CD4-positive, alpha-beta T cell (primary cell): ENCODE measurements at regions of chr1 and their contacts with region 1.

Region 1: DNA sequence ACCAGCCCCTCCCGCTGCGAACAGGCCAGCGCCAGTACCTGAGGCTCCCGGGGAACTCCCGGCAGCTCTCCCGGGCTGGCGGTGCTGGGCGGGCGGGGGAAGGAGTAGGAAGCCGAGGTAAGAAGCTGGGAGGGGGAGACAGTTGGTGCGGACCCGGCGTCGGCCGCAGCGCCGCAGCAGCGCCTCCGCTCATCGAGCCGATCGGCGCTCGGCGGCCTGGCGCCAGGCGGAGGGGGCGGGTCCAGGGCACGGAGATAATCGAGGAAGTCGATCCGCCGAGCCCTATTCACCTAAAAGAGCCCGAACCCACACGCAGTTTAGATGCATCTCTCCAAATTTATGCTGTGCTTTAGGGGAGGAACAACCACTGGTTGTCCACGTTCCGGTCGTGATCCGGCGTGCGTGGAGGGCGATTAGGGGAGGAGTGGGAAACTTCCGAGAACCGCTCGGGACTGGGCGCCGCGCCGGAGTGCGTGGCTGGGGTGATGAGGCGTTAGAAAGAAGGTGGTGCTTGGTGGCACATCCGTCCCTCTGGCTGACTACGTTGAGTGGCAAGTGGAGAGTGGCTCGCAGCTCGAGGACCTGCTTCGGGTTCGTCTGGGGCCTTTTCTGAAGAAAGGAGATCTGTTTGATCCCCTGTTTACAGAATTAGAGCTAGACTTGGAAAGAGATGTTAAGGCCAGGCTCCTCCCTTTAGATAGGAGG is at the start of gene VAMP4:
- DNase-seq: peak; percentile 77 to 94 (median 84)
- ATAC-seq: peak; percentile 88
- H3K4me3 ChIP-seq: peak within 1 kb of the TSS; percentile 80
- H3K4me3 Mint-ChIP-seq: peak within 1 kb of the TSS; percentile 99
- H3K27ac ChIP-seq: peak within 1 kb of the TSS; percentile 95 to 96
- H3K27ac Mint-ChIP-seq: peak within 1 kb of the TSS; percentile 100
- H3K4me1 ChIP-seq: peaks cover 28% of the 10 kb centered on the region
- H3K4me1 Mint-ChIP-seq: peaks cover 63% of the 10 kb centered on the region
- H3K27me3 ChIP-seq: no peaks in the 10 kb centered on the region
- H3K27me3 Mint-ChIP-seq: no peaks in the 10 kb centered on the region
- CTCF ChIP-seq: no peak
- total RNA-seq, gene VAMP4: 8.1 to 12.1 TPM

Region 2: DNA sequence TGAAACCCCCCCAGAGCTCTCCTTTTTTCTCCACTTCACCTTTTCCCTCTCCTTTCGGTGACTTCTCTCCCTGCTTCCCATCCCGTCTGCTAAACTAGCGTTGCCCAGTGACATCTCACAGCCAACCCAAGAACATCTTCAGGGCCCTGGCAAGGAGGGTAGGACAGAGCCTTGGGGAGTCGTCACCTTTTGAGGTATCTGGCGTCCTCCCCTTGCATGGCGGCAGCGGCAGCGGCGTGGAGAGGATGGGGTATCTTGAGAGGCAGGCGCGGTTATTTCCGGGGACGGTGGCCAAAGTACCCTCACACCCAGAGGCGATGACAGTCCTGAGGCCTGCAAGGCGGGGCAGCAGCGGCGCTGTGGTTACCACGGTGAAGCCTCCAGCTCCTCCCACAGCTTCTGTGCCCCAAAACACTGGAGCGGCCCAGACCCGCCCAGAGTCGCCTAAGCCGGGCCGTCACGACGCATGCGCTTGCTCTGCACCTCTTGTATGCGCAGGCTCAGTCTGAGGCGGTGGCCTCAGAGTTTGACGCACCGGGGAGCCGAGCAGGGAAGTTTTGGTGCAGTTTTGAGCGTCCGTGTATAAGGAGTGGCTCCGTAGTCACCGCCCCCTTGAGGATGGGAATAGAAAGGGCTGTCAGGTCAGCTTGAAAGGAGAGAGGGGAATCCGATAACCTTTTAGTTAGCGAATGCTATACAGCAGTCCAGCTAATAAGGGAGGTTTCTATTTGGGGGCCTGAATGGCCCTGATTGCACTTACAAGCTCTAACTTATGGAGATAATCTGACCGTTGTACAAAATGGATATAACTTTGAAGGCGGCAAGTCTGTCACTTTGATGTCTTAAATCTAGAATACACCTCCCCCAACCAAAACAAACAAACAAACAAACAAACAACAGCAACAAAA is 1667.5 kb before region 1 on chr1 and contains the start of gene KIFAP3:
- CTCF ChIA-PET with region 1: no interaction called
- POLR2A ChIA-PET with region 1: interaction called, 3 read pairs
- intact Hi-C with region 1: loop called in 1 of 2 experiments (anchors 10 kb)
- DNase-seq: peak; percentile 88 to 99 (median 93)
- ATAC-seq: peak; percentile 95
- H3K4me3 ChIP-seq: peak within 1 kb of the TSS; percentile 83
- H3K4me3 Mint-ChIP-seq: peak within 1 kb of the TSS; percentile 97
- H3K27ac ChIP-seq: peak within 1 kb of the TSS; percentile 77 to 83
- H3K27ac Mint-ChIP-seq: peak within 1 kb of the TSS; percentile 85
- H3K4me1 ChIP-seq: peaks cover 15% of the 10 kb centered on the region
- H3K4me1 Mint-ChIP-seq: peaks cover 54% of the 10 kb centered on the region
- H3K27me3 ChIP-seq: no peaks in the 10 kb centered on the region
- H3K27me3 Mint-ChIP-seq: no peaks in the 10 kb centered on the region
- CTCF ChIP-seq: peak; percentile 69
- total RNA-seq, gene KIFAP3: 12.1 to 12.6 TPM

Region 3: DNA sequence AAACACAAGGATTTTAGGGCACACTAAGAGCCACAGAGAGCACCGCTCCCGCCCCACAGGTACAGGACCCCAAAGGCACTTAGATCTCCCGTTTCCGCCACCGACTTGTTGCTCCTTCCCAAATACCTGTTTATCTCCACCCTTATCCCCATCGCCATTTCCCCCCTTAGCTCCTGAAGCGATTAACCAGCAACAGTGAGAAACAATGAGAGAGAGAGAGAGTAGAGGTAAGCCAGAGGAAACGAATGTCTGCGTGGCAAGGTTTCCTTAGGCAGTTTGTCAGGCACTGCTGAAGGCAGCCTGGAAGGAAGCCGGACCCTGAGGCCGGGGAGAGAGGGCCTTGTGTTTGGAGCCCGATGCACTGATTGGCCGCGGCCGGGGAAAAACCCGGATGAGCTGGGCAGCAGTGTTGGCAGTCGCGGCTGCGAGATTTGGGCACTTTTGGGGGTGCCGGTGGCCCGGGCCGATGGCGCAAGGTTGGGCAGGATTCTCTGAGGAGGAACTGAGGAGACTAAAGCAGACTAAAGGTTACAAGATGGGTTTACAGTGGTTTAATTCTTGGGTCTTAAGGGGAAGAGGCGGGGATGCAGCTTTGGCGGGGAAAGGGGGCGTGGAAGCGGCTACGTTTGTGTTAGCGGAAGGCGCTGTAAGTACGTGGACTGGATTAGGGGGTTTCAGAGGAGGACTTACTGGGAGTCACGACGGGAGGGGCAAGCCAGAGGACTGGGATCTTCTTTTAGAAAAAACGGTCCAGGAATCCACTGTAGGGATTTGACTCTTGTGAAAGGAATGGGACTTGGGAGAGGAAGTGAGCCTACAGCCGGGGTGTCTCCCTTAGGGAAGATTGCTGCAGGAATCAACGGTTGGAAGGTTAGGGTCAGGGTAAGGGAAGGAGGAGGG is 1210.0 kb before region 1 on chr1 and contains the start of gene GORAB:
- CTCF ChIA-PET with region 1: no interaction called
- POLR2A ChIA-PET with region 1: no interaction called
- intact Hi-C with region 1: loop called in 1 of 2 experiments (anchors 5 kb)
- DNase-seq: peak; percentile 69 to 92 (median 78)
- ATAC-seq: peak; percentile 91
- H3K4me3 ChIP-seq: peak within 1 kb of the TSS; percentile 61
- H3K4me3 Mint-ChIP-seq: no peak within 1 kb of the TSS
- H3K27ac ChIP-seq: peak within 1 kb of the TSS; percentile 73 to 86
- H3K27ac Mint-ChIP-seq: no peak within 1 kb of the TSS
- H3K4me1 ChIP-seq: peaks cover 12% of the 10 kb centered on the region
- H3K4me1 Mint-ChIP-seq: peaks cover 20% of the 10 kb centered on the region
- H3K27me3 ChIP-seq: no peaks in the 10 kb centered on the region
- H3K27me3 Mint-ChIP-seq: no peaks in the 10 kb centered on the region
- CTCF ChIP-seq: no peak
- total RNA-seq, gene GORAB: 23.0 to 26.6 TPM

Region 4: GRCh38 chr1:171583581-171584201 is 158.3 kb before region 1 on chr1:
- CTCF ChIA-PET with region 1: no interaction called
- POLR2A ChIA-PET with region 1: interaction called, 3 read pairs
- intact Hi-C with region 1: loop called in 1 of 2 experiments (anchors 10 kb)
- DNase-seq: no peak
- ATAC-seq: no peak
- H3K4me3 ChIP-seq: no peak overlapping the region
- H3K4me3 Mint-ChIP-seq: no peak overlapping the region
- H3K27ac ChIP-seq: no peak overlapping the region
- H3K27ac Mint-ChIP-seq: no peak overlapping the region
- H3K4me1 ChIP-seq: no peaks in the 10 kb centered on the region
- H3K4me1 Mint-ChIP-seq: peaks cover 9% of the 10 kb centered on the region
- H3K27me3 ChIP-seq: no peaks in the 10 kb centered on the region
- H3K27me3 Mint-ChIP-seq: no peaks in the 10 kb centered on the region
- CTCF ChIP-seq: no peak

Region 5: GRCh38 chr1:171769171-171769570 is 27.1 kb after region 1 on chr1:
- CTCF ChIA-PET with region 1: no interaction called
- POLR2A ChIA-PET with region 1: interaction called, 12 read pairs
- intact Hi-C with region 1: no loop called
- DNase-seq: no peak
- ATAC-seq: no peak
- H3K4me3 ChIP-seq: no peak overlapping the region
- H3K4me3 Mint-ChIP-seq: no peak overlapping the region
- H3K27ac ChIP-seq: no peak overlapping the region
- H3K27ac Mint-ChIP-seq: no peak overlapping the region
- H3K4me1 ChIP-seq: no peaks in the 10 kb centered on the region
- H3K4me1 Mint-ChIP-seq: no peaks in the 10 kb centered on the region
- H3K27me3 ChIP-seq: no peaks in the 10 kb centered on the region
- H3K27me3 Mint-ChIP-seq: peaks cover 14% of the 10 kb centered on the region
- CTCF ChIP-seq: no peak

Region 6: GRCh38 chr1:171781176-171781875 is 39.3 kb after region 1 on chr1 and contains the start of gene METTL13:
- CTCF ChIA-PET with region 1: interaction called, 18 read pairs
- POLR2A ChIA-PET with region 1: interaction called, 122 read pairs
- intact Hi-C with region 1: loop called (anchors 1 kb)
- DNase-seq: peak; percentile 95 to 100 (median 98)
- ATAC-seq: peak; percentile 91
- H3K4me3 ChIP-seq: peak within 1 kb of the TSS; percentile 78
- H3K4me3 Mint-ChIP-seq: peak within 1 kb of the TSS; percentile 99
- H3K27ac ChIP-seq: peak within 1 kb of the TSS; percentile 63 to 75
- H3K27ac Mint-ChIP-seq: peak within 1 kb of the TSS; percentile 90
- H3K4me1 ChIP-seq: peaks cover 46% of the 10 kb centered on the region
- H3K4me1 Mint-ChIP-seq: peaks cover 47% of the 10 kb centered on the region
- H3K27me3 ChIP-seq: no peaks in the 10 kb centered on the region
- H3K27me3 Mint-ChIP-seq: no peaks in the 10 kb centered on the region
- CTCF ChIP-seq: no peak
- total RNA-seq, gene METTL13: 6.5 to 7.9 TPM